ENCODE measurements at regions of chr1 and their contacts with region 1.

Region 1: GRCh38 chr1:160726498-160727315 is 12.3 kb upstream of the SLAMF7 start:
- DNase-seq: peak; percentile 55
- ATAC-seq: peak; percentile 85
- H3K4me3 ChIP-seq: no peak overlapping the region
- H3K27ac ChIP-seq: no peak overlapping the region
- H3K4me1 ChIP-seq: no peaks in the 10 kb centered on the region
- H3K27me3 ChIP-seq: no peaks in the 10 kb centered on the region; the same call in 1 of the 2 replicates
- CTCF ChIP-seq: peak; percentile 60
- POLR2A ChIP-seq: no peak
- RAD21 ChIP-seq: peak; percentile 68

Region 2: GRCh38 chr1:160711602-160712311 is 14.9 kb before region 1 on chr1 and contains the start of gene CD48:
- CTCF ChIA-PET with region 1: no interaction called
- POLR2A ChIA-PET with region 1: no interaction called
- dilution Hi-C with region 1: no loop called
- in situ Hi-C with region 1: no loop called
- intact Hi-C with region 1: no loop called
- DNase-seq: no peak
- ATAC-seq: no peak
- H3K4me3 ChIP-seq: no peak within 1 kb of the TSS
- H3K27ac ChIP-seq: no peak within 1 kb of the TSS
- H3K4me1 ChIP-seq: no peaks in the 10 kb centered on the region
- H3K27me3 ChIP-seq: no peaks in the 10 kb centered on the region
- CTCF ChIP-seq: no peak
- POLR2A ChIP-seq: no peak
- RAD21 ChIP-seq: no peak
- total RNA-seq, gene CD48: not detected in 2 replicates

Region 3: GRCh38 chr1:160925652-160926241 is 199.0 kb after region 1 on chr1:
- CTCF ChIA-PET with region 1: no interaction called
- POLR2A ChIA-PET with region 1: no interaction called
- dilution Hi-C with region 1: no loop called
- in situ Hi-C with region 1: no loop called
- intact Hi-C with region 1: no loop called
- DNase-seq: peak; percentile 14
- ATAC-seq: no peak
- H3K4me3 ChIP-seq: no peak overlapping the region
- H3K27ac ChIP-seq: no peak overlapping the region
- H3K4me1 ChIP-seq: no peaks in the 10 kb centered on the region
- H3K27me3 ChIP-seq: no peaks in the 10 kb centered on the region
- CTCF ChIP-seq: no peak
- POLR2A ChIP-seq: no peak
- RAD21 ChIP-seq: no peak

Region 4: GRCh38 chr1:160951443-160952128 is 224.9 kb after region 1 on chr1:
- CTCF ChIA-PET with region 1: no interaction called
- POLR2A ChIA-PET with region 1: no interaction called
- dilution Hi-C with region 1: no loop called
- in situ Hi-C with region 1: no loop called
- intact Hi-C with region 1: loop called (anchors 1 kb)
- DNase-seq: peak; percentile 41
- ATAC-seq: peak; percentile 93
- H3K4me3 ChIP-seq: no peak overlapping the region
- H3K27ac ChIP-seq: no peak overlapping the region
- H3K4me1 ChIP-seq: no peaks in the 10 kb centered on the region
- H3K27me3 ChIP-seq: peaks cover 4% of the 10 kb centered on the region; the same call in 1 of the 2 replicates
- CTCF ChIP-seq: peak; percentile 61
- POLR2A ChIP-seq: no peak
- RAD21 ChIP-seq: peak; percentile 52

Region 5: DNA sequence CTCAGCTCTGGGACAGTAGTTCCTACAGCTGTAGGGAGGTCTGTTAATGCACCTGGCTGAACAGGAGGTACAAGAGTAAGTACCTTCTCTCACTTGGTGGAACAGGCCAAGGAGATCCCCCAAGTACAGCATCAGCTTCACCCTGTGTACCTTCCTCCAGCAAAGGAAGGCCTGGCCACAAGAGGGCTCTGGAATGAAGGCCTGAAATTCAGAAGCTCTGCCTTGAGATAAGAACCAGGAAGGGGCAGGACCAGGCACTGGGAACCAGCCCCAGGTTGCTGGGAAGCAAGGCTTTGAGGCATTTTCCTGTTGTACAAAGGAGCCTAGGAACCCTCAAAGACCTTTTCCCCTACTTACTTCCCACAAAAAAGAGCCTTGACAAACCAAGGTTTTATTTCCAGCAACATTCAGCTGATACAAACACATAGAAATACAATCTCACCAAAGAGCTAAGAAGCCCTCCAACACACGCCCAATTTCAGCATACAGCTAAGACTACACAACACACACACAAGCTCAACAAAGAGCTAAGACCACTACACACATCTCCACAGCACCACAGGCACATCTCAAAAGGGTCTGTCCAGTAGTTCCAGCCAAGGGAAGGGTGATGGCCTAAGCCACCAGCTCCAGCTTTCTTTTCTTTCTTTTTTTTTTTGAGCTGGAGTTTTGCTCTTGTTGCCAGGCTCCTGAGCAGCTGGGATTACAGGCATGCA is 270.8 kb after region 1 on chr1:
- CTCF ChIA-PET with region 1: no interaction called
- POLR2A ChIA-PET with region 1: no interaction called
- dilution Hi-C with region 1: no loop called
- in situ Hi-C with region 1: no loop called
- intact Hi-C with region 1: loop called (anchors 2 kb)
- DNase-seq: peak; percentile 64
- ATAC-seq: peak; percentile 86
- H3K4me3 ChIP-seq: no peak overlapping the region
- H3K27ac ChIP-seq: no peak overlapping the region
- H3K4me1 ChIP-seq: no peaks in the 10 kb centered on the region
- H3K27me3 ChIP-seq: no peaks in the 10 kb centered on the region
- CTCF ChIP-seq: peak; percentile 65
- POLR2A ChIP-seq: no peak
- RAD21 ChIP-seq: peak; percentile 62

Region 6: DNA sequence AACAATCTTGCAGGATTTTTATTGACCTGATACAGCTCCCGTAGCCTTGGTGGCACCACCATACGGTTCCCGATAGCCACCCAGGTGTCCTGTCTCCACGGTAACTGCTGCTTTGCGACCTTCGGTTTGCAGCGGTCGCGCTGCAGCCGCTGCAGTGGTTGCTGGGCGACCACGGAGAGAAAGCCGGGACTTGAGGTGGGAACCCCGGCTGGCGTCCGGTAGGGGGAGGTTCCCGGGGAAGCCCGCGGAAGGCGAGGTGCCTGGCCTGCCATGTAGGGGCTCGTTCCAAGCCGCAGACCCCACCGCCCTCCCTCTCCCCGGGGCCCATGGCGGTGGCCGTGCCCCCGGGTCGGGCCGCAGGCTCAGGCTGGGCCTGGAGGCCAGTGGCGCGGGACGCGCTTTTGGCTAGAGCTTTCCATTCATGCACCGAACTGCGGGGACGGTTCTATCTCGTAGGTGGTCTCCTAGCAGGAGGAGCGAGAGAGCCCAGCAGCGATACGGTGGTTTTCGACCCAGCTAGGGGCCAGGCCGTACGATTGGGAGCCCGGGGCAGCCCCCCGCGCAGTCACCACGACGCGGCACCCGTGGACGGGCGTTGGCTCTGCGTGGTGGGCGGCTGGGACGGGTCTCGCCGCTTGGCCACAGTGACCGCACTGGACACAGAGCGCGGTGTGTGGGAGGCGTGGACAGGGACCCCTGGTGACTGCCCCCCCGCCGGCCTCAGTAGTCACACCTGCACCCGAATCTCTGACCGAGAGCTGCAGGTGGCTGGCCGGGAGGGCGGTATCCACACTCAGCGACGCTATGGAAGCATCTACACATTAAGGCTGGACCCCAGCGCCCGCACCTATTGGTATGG is 371.7 kb after region 1 on chr1 and contains the start of gene KLHDC9:
- CTCF ChIA-PET with region 1: no interaction called
- POLR2A ChIA-PET with region 1: no interaction called
- dilution Hi-C with region 1: no loop called
- in situ Hi-C with region 1: no loop called
- intact Hi-C with region 1: loop called (anchors 5 kb)
- DNase-seq: peak; percentile 54
- ATAC-seq: peak; percentile 73
- H3K4me3 ChIP-seq: peak within 1 kb of the TSS; percentile 43
- H3K27ac ChIP-seq: no peak within 1 kb of the TSS
- H3K4me1 ChIP-seq: peaks cover 5% of the 10 kb centered on the region; the same call in 1 of the 2 replicates
- H3K27me3 ChIP-seq: no peaks in the 10 kb centered on the region
- CTCF ChIP-seq: no peak
- POLR2A ChIP-seq: no peak
- RAD21 ChIP-seq: no peak
- total RNA-seq, gene KLHDC9: 0.18 TPM in 1 of 2 replicates, not detected in the other

Region 7: DNA sequence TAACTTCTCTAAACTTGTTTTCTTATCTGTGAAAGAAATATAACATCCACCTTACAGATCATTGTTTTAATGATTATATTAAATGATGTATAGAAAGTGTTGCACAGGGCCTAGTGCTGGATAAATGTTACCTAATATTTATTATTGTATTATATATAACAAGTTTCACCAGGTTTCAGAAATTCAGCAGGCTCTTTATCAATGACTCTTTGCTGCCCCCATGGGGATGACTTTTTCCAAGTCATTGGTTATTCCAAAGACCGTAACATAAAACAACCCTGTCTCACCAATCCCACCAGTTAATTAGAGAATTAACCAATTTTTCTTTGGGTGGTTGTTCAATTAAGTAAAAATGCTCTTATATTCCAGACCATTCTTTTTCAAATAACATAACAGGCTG is 413.1 kb after region 1 on chr1:
- CTCF ChIA-PET with region 1: no interaction called
- POLR2A ChIA-PET with region 1: no interaction called
- dilution Hi-C with region 1: no loop called
- in situ Hi-C with region 1: no loop called
- intact Hi-C with region 1: loop called (anchors 2 kb)
- DNase-seq: peak; percentile 57
- ATAC-seq: peak; percentile 60
- H3K4me3 ChIP-seq: no peak overlapping the region
- H3K27ac ChIP-seq: no peak overlapping the region
- H3K4me1 ChIP-seq: no peaks in the 10 kb centered on the region
- H3K27me3 ChIP-seq: no peaks in the 10 kb centered on the region
- CTCF ChIP-seq: peak; percentile 64
- POLR2A ChIP-seq: no peak
- RAD21 ChIP-seq: peak; percentile 66